Posterior cingulate gyrus (tissue), 11 donors: ENCODE measurements at regions of chr7 and their contacts with region 1.

Region 1: DNA sequence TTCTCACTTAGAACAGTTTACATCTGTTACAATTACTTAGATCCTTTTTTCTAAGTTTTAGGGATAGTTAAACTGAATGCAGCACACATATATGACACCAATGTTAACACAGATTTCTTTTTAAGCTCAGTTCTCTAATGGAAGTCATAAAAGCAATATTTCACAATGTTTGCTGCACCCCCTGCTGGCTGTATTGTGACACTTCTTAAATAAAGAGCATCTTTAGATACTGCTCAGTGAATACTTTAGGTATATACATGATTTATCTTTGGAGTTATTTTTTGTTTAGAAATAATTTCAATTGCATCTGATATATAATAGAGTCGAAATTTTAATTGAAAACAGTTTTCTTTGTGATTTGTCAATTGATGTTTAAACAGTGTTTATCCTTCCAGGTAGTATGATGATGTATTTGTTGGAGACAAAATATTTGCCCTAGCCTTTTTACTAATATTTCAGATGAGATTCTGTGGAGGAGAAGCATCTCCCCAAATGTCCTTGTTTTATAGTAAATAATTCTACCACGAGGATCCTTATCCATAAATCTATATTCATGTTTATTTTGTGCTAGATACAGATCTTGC is 174.4 kb downstream of the ST7 start:
- DNase-seq: peak in 5 of 10 donors; percentile 38 to 53 (median 47)

Region 2: GRCh38 chr7:116929914-116930913 is 197.5 kb before region 1 on chr7:
- intact Hi-C with region 1: loop called (anchors 2 kb)
- DNase-seq: peak; percentile 77 to 97 (median 90)

Region 3: GRCh38 chr7:117619578-117620094 is 492.0 kb after region 1 on chr7:
- intact Hi-C with region 1: no loop called
- DNase-seq: no peak